ENCODE measurements at regions of chr5 and their contacts with region 1.

Region 1: GRCh38 chr5:74648835-74649293 is 8.3 kb upstream of the ENC1 start:
- DNase-seq: no peak
- ATAC-seq: peak; percentile 93
- H3K4me3 ChIP-seq: peak overlapping the region in 1 of 2 experiments; percentile 22; a peak in 1 of 4 replicates
- H3K27ac ChIP-seq: no peak overlapping the region
- H3K4me1 ChIP-seq: peaks cover 4% of the 10 kb centered on the region; the same call in 1 of the 2 replicates
- H3K27me3 ChIP-seq: no peaks in the 10 kb centered on the region
- CTCF ChIP-seq: peak; percentile 82

Region 2: GRCh38 chr5:73902327-73903051 is 746.4 kb before region 1 on chr5:
- CTCF ChIA-PET with region 1: interaction called, 3 read pairs
- POLR2A ChIA-PET with region 1: no interaction called
- in situ Hi-C with region 1: no loop called
- intact Hi-C with region 1: loop called (anchors 2 kb)
- DNase-seq: peak; percentile 25
- ATAC-seq: no peak
- H3K4me3 ChIP-seq: no peak overlapping the region
- H3K27ac ChIP-seq: no peak overlapping the region
- H3K4me1 ChIP-seq: peaks cover 11% of the 10 kb centered on the region
- H3K27me3 ChIP-seq: no peaks in the 10 kb centered on the region
- CTCF ChIP-seq: peak; percentile 80

Region 3: GRCh38 chr5:74667396-74667795 is 18.5 kb after region 1 on chr5:
- CTCF ChIA-PET with region 1: no interaction called
- POLR2A ChIA-PET with region 1: no interaction called
- in situ Hi-C with region 1: no loop called
- intact Hi-C with region 1: no loop called
- DNase-seq: no peak
- ATAC-seq: no peak
- H3K4me3 ChIP-seq: no peak overlapping the region
- H3K27ac ChIP-seq: no peak overlapping the region
- H3K4me1 ChIP-seq: no peaks in the 10 kb centered on the region
- H3K27me3 ChIP-seq: peaks cover 2% of the 10 kb centered on the region; the same call in 1 of the 2 replicates
- CTCF ChIP-seq: no peak